Activated T-helper 2 cell treated with anti-CD3 and anti-CD28 coated beads, Interferon-gamma antibody, Interleukin-2, Interleukin-4, amounts not matched to agents 10 μg/mL and 5 μg/mL and 100 μg/mL, durations not matched to agents 14 hours and 24 hours and 36 hours (primary cell): ENCODE measurements at regions of chr3 and their contacts with region 1.

Region 1: DNA sequence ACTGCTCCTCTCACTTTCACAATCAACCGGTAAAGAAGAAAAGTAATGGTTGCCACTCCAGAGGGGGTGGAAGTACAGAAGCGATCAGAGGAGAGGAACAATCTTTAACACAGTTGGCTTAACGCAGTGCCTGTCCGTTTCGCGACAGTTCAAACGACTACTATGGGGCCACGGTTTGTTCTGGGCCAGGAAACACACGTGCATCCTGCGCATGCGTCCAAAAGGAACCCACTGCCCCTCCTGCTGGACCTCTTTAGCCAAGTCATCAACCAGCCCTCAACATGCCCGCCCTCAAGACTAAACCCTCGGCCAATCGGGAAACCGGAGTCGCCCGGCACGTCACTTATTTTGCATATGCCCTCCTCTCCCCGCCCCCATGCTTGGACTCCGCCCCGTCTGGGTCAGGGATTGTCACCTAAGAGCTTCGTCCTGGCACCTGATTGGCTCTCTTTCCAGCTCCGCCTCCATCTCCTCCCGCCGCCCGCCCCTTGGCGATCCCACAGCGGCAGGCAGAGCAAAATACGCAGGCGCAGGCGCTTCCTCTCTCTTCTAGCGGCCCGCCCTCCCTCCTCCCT is 345 bp upstream of the CDV3 start:
- DNase-seq: peak; percentile 100
- H3K4me3 Mint-ChIP-seq: peak overlapping the region; percentile 89
- H3K27ac Mint-ChIP-seq: peak overlapping the region; percentile 100
- H3K4me1 Mint-ChIP-seq: peaks cover 40% of the 10 kb centered on the region
- H3K27me3 Mint-ChIP-seq: no peaks in the 10 kb centered on the region

Region 2: GRCh38 chr3:132416807-132417694 is 1156.1 kb before region 1 on chr3 and contains the start of gene DNAJC13:
- intact Hi-C with region 1: loop called (anchors 2 kb)
- DNase-seq: peak; percentile 91
- H3K4me3 Mint-ChIP-seq: peak within 1 kb of the TSS; percentile 99
- H3K27ac Mint-ChIP-seq: peak within 1 kb of the TSS; percentile 95
- H3K4me1 Mint-ChIP-seq: peaks cover 39% of the 10 kb centered on the region
- H3K27me3 Mint-ChIP-seq: peaks cover 1% of the 10 kb centered on the region
- total RNA-seq, gene DNAJC13: 32.8 and 36.1 TPM in 2 replicates

Region 3: GRCh38 chr3:132817646-132818177 is 755.4 kb before region 1 on chr3:
- intact Hi-C with region 1: no loop called
- DNase-seq: no peak
- H3K4me3 Mint-ChIP-seq: no peak overlapping the region
- H3K27ac Mint-ChIP-seq: no peak overlapping the region
- H3K4me1 Mint-ChIP-seq: no peaks in the 10 kb centered on the region
- H3K27me3 Mint-ChIP-seq: no peaks in the 10 kb centered on the region

Region 4: DNA sequence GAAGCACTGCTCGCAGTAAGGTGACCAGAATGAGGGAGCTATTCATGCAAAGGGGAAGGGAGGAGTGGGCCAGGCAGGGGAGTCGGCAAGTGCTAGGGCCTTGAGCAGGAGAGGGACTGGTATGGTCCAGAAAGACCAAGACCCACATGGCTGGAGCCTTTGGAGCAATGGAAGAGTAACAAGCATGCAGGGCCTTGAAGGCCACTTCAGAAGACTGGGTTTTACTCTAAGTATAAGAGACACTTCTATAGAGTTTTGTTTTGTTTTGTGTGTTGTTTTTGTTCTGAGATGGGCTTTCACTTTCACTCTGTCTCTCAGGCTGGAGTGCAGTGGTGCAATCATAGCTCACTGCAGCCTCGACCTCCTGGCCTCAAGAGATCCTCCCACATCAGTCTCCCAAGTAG is 131.3 kb before region 1 on chr3:
- intact Hi-C with region 1: loop called (anchors 1 kb)
- DNase-seq: peak; percentile 17
- H3K4me3 Mint-ChIP-seq: peak overlapping the region; percentile 71
- H3K27ac Mint-ChIP-seq: peak overlapping the region; percentile 94
- H3K4me1 Mint-ChIP-seq: peaks cover 39% of the 10 kb centered on the region
- H3K27me3 Mint-ChIP-seq: no peaks in the 10 kb centered on the region

Region 5: DNA sequence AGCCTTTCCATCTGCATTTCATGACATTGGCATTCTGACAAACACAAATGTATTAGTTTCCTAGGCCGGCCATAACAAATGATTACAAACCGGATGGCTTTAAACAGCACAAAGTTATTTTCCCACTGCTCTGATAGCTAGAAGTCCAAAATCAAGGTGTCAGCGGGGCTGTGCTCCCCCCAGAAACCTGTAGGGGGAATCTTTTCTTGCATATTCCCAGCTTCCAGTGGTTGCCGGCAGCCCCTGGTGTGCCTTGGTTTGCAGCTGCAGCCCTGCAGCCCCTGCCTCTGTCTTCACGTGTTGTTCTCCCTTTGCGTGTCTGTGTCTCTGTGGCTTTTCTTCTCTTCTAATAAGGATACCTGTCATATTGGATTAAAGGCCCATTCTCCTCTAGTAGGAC is 78.7 kb before region 1 on chr3:
- intact Hi-C with region 1: loop called (anchors 1 kb)
- DNase-seq: no peak
- H3K4me3 Mint-ChIP-seq: no peak overlapping the region
- H3K27ac Mint-ChIP-seq: no peak overlapping the region
- H3K4me1 Mint-ChIP-seq: peaks cover 49% of the 10 kb centered on the region
- H3K27me3 Mint-ChIP-seq: no peaks in the 10 kb centered on the region

Region 6: GRCh38 chr3:133561679-133562078 is 11.5 kb before region 1 on chr3:
- intact Hi-C with region 1: no loop called
- DNase-seq: no peak
- H3K4me3 Mint-ChIP-seq: no peak overlapping the region
- H3K27ac Mint-ChIP-seq: no peak overlapping the region
- H3K4me1 Mint-ChIP-seq: no peaks in the 10 kb centered on the region
- H3K27me3 Mint-ChIP-seq: peaks cover 9% of the 10 kb centered on the region

Region 7: GRCh38 chr3:133595341-133595740 is 22.2 kb after region 1 on chr3:
- intact Hi-C with region 1: loop called (anchors 1 kb)
- DNase-seq: no peak
- H3K4me3 Mint-ChIP-seq: no peak overlapping the region
- H3K27ac Mint-ChIP-seq: peak overlapping the region; percentile 79
- H3K4me1 Mint-ChIP-seq: peaks cover 28% of the 10 kb centered on the region
- H3K27me3 Mint-ChIP-seq: no peaks in the 10 kb centered on the region

Region 8: DNA sequence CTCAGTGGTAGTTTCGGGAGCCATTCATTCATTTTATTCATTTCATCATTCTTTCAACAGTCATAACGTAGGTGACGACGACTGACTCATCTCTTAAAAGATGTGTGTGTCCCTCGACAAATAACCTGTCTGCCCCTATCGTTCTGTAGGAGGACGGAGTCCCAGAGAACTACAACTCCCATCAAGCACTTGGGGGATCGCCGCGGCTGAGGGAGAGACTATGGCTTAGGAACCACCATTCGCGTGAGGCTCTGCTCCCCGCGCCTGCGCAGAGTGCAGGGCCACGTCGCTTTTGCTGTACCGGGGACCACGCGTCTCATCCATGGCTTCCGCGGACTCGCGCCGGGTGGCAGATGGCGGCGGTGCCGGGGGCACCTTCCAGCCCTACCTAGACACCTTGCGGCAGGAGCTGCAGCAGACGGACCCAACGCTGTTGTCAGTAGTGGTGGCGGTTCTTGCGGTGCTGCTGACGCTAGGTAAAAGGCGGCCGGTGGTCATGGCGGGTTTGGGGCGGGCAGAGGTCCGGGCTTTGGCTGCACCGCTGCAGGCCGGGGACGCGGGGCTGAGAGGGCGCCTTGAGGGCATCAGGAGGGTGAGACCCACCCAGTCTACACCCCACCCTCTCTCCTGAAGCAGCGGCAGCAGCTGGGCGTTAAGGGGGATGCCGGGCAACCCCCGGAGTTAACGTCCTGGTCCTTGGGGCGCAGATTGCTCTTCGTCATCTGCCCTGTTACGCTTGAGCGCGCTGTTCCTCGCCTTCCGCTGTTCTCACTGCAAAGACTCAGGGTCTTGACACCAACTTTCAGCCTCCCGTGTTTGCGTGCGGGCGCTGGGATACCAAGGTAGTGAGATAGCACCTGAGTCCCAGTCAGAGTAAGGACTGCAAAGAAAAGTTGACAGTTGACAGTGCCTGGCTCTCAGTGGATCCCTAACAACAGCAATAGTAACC is 232.7 kb after region 1 on chr3 and contains the start of gene SRPRB:
- intact Hi-C with region 1: loop called (anchors 1 kb)
- DNase-seq: peak; percentile 94
- H3K4me3 Mint-ChIP-seq: peak within 1 kb of the TSS; percentile 94
- H3K27ac Mint-ChIP-seq: peak within 1 kb of the TSS; percentile 90
- H3K4me1 Mint-ChIP-seq: peaks cover 17% of the 10 kb centered on the region
- H3K27me3 Mint-ChIP-seq: peaks cover 9% of the 10 kb centered on the region
- total RNA-seq, gene SRPRB: 91.5 and 92.1 TPM in 2 replicates

Region 9: GRCh38 chr3:134485718-134486576 is 912.8 kb after region 1 on chr3 and contains the starts of genes ANAPC13 and CEP63:
- intact Hi-C with region 1: loop called (anchors 2 kb)
- DNase-seq: peak; percentile 92
- H3K4me3 Mint-ChIP-seq: peak within 1 kb of the TSS; percentile 97
- H3K27ac Mint-ChIP-seq: peak within 1 kb of the TSS; percentile 99
- H3K4me1 Mint-ChIP-seq: peaks cover 37% of the 10 kb centered on the region
- H3K27me3 Mint-ChIP-seq: no peaks in the 10 kb centered on the region
- total RNA-seq, gene ANAPC13: 27.3 and 27.4 TPM in 2 replicates
- total RNA-seq, gene CEP63: 18.0 and 20.1 TPM in 2 replicates